ENCODE measurements at regions of chr20 and their contacts with region 1.

Region 1: GRCh38 chr20:34948030-34948429 is 7.6 kb downstream of the GSS start:
- DNase-seq: peak; percentile 67
- H3K4me3 ChIP-seq: no peak overlapping the region
- H3K27ac ChIP-seq: no peak overlapping the region
- H3K4me1 ChIP-seq: peaks cover 31% of the 10 kb centered on the region
- H3K27me3 ChIP-seq: no peaks in the 10 kb centered on the region
- CTCF ChIP-seq: peak in 1 of 2 donors; percentile 34

Region 2: DNA sequence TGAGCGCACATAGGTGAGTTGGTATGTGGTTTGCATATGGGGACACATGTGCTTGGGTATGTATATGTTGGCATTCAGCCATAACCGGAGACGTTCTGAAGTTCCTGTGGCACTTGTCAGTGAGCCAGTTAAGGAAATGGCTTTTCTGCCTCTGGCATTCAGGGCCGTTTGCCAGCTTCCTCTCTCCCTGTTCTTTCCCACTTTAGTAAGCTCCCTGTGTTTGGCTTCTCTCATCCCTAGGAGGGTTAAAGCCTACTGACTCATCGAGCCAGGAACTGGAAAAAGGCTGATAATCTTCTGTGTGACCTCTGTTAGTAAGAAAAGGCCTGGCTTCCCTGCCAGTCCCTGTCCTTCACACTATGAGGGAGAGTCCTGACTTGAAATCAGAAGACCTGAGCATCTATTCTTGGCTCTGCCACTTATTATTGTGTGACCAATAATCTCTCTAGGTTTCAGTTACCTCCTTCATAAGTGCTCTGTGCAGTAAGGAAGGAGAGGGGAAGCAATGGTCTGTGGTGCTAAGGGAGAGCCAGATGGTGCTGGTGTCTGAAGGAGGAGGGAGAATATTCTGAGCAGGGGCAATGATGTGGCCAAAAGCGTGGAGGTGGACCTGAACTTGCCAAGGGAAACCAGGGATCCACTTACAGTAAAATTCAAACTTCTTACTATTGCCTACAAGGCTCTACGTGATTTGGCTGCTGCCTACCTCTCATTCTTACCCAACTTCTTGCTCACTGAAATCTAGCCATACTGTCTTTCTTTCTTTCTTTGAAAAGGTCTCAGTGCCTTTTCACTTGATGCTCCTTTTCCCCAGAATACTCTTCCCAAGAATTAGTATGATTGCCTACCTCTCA is 40.2 kb before region 1 on chr20:
- CTCF ChIA-PET with region 1: no interaction called
- dilution Hi-C with region 1: no loop called
- in situ Hi-C with region 1: no loop called
- intact Hi-C with region 1: loop called (anchors 1 kb)
- DNase-seq: peak; percentile 95
- H3K4me3 ChIP-seq: no peak overlapping the region
- H3K27ac ChIP-seq: peak overlapping the region; percentile 13
- H3K4me1 ChIP-seq: peaks cover 22% of the 10 kb centered on the region
- H3K27me3 ChIP-seq: no peaks in the 10 kb centered on the region
- CTCF ChIP-seq: no peak

Region 3: GRCh38 chr20:34922654-34923424 is 25.2 kb before region 1 on chr20:
- CTCF ChIA-PET with region 1: no interaction called
- dilution Hi-C with region 1: loop called (anchors 5 kb)
- in situ Hi-C with region 1: no loop called
- intact Hi-C with region 1: loop called (anchors 1 kb)
- DNase-seq: peak; percentile 80
- H3K4me3 ChIP-seq: no peak overlapping the region
- H3K27ac ChIP-seq: no peak overlapping the region
- H3K4me1 ChIP-seq: peaks cover 42% of the 10 kb centered on the region
- H3K27me3 ChIP-seq: no peaks in the 10 kb centered on the region
- CTCF ChIP-seq: no peak

Region 4: GRCh38 chr20:34970193-34970840 is 22.3 kb after region 1 on chr20:
- CTCF ChIA-PET with region 1: no interaction called
- dilution Hi-C with region 1: no loop called
- in situ Hi-C with region 1: no loop called
- intact Hi-C with region 1: no loop called
- DNase-seq: no peak
- H3K4me3 ChIP-seq: no peak overlapping the region
- H3K27ac ChIP-seq: no peak overlapping the region
- H3K4me1 ChIP-seq: no peaks in the 10 kb centered on the region
- H3K27me3 ChIP-seq: no peaks in the 10 kb centered on the region
- CTCF ChIP-seq: no peak

Region 5: GRCh38 chr20:35015206-35016193 is 67.5 kb after region 1 on chr20:
- CTCF ChIA-PET with region 1: no interaction called
- dilution Hi-C with region 1: loop called (anchors 5 kb)
- in situ Hi-C with region 1: no loop called
- intact Hi-C with region 1: no loop called
- DNase-seq: no peak
- H3K4me3 ChIP-seq: no peak overlapping the region
- H3K27ac ChIP-seq: no peak overlapping the region
- H3K4me1 ChIP-seq: no peaks in the 10 kb centered on the region
- H3K27me3 ChIP-seq: no peaks in the 10 kb centered on the region
- CTCF ChIP-seq: no peak